Sigmoid colon (tissue), 7 donors: ENCODE measurements at regions of chr2 and their contacts with region 1.

Region 1: GRCh38 chr2:7748717-7749415 is 831.7 kb downstream of the RNF144A start:
- DNase-seq: no peak
- H3K4me3 ChIP-seq: no peak overlapping the region
- H3K27ac ChIP-seq: no peak overlapping the region
- H3K4me1 ChIP-seq: peaks cover 0 to 47% (median 20%) of the 10 kb centered on the region in 4 donors
- H3K27me3 ChIP-seq: no peaks in the 10 kb centered on the region
- CTCF ChIP-seq: no peak
- EP300 ChIP-seq: no peak
- POLR2A ChIP-seq: no peak

Region 2: GRCh38 chr2:6999211-6999877 is 749.5 kb before region 1 on chr2:
- intact Hi-C with region 1: no loop called
- DNase-seq: no peak
- H3K4me3 ChIP-seq: no peak overlapping the region
- H3K27ac ChIP-seq: no peak overlapping the region
- H3K4me1 ChIP-seq: no peaks in the 10 kb centered on the region
- H3K27me3 ChIP-seq: no peaks in the 10 kb centered on the region
- CTCF ChIP-seq: no peak
- EP300 ChIP-seq: no peak
- POLR2A ChIP-seq: no peak

Region 3: DNA sequence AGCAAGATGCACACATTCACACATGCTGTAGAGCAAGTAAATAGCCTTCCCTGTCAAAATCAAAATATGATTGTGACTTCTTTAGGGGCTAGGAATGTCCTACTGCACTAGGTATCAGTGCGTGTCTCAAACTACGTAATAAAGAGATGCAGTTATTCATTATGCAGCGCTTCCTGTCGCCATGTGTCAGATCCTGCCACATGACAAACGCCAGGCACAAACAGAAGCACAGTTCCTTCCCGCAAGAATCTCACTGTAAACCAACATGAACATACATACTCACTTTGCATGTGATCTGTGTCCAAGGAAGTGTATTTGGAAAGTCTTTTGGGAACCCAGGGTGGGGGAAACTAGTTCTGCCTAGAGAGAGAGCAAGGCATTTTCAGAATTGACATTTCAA is 231.8 kb before region 1 on chr2:
- intact Hi-C with region 1: loop called (anchors 10 kb)
- DNase-seq: no peak
- H3K4me3 ChIP-seq: no peak overlapping the region
- H3K27ac ChIP-seq: peak overlapping the region in 3 of 4 donors; percentile 25 to 46 (median 29)
- H3K4me1 ChIP-seq: peaks cover 0 to 19% (median 18%) of the 10 kb centered on the region in 4 donors
- H3K27me3 ChIP-seq: no peaks in the 10 kb centered on the region
- CTCF ChIP-seq: no peak
- EP300 ChIP-seq: peak in 2 of 4 donors; percentile 18 to 33
- POLR2A ChIP-seq: no peak

Region 4: GRCh38 chr2:8154936-8155335 is 406.1 kb after region 1 on chr2:
- intact Hi-C with region 1: loop called (anchors 5 kb)
- DNase-seq: no peak
- H3K4me3 ChIP-seq: no peak overlapping the region
- H3K27ac ChIP-seq: no peak overlapping the region
- H3K4me1 ChIP-seq: peaks cover 0 to 18% (median 13%) of the 10 kb centered on the region in 4 donors
- H3K27me3 ChIP-seq: no peaks in the 10 kb centered on the region
- CTCF ChIP-seq: no peak
- EP300 ChIP-seq: no peak
- POLR2A ChIP-seq: no peak